Psoas muscle (tissue), 8 donors: ENCODE measurements at regions of chr11 and their contacts with region 1.

Region 1: DNA sequence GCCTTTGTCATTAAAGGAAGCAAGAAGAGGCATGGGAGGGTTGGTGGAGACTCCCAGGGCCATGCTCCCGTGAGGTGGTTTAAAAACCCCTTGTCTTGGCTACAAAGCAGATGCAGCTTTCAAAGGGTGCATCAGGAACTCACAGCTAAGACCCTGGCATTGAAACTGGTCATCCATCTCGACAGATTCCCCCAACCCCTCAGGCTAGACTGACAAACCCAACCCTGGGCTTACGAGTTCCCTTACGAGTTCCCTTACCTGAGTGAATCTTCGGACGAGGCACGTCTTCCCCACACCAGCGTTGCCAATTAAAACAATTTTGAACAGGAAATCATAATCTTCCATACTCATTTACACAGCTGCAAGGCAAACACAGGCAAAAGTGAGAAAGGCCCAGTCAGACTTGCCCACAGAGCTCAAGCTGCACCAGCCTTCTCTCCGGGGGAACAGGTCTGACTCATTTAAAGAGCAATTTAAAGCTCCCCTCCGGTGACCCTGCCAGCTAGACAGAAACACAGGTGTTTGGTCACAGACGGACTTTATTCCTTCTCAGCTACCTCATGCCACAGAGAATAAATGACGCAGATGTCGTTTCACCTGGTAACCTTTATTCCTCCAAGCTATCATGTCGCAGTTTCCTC is 74.6 kb downstream of the RAB30 start:
- DNase-seq: no peak
- ATAC-seq: peak; percentile 68 to 86 (median 80)
- H3K4me3 ChIP-seq: peak overlapping the region; percentile 34
- H3K27ac ChIP-seq: peak overlapping the region; percentile 66
- H3K4me1 ChIP-seq: peaks cover 65% of the 10 kb centered on the region
- H3K27me3 ChIP-seq: no peaks in the 10 kb centered on the region
- CTCF ChIP-seq: no peak

Region 2: GRCh38 chr11:82747471-82747870 is 249.6 kb before region 1 on chr11:
- intact Hi-C with region 1: no loop called
- DNase-seq: no peak
- ATAC-seq: no peak
- H3K4me3 ChIP-seq: no peak overlapping the region
- H3K27ac ChIP-seq: no peak overlapping the region
- H3K4me1 ChIP-seq: no peaks in the 10 kb centered on the region
- H3K27me3 ChIP-seq: no peaks in the 10 kb centered on the region
- CTCF ChIP-seq: no peak

Region 3: DNA sequence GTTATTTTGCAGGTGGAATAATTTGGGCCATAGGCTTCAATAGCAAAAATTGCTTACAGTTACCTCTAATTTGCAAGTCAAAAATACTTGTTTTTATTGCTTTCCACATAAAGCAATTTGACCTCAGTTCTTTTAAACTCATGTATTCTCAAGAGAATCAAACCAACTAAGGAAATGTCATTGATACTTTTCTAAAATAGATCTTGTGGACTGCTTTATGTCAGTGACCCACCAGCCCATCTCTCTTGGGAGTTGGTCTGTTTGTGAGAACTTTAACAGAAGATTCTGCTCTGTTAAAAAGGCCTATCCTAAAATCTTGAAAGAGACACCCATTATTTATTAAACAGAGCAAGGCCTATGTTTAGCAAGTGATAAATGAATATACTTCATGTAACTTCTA is 20.3 kb before region 1 on chr11:
- intact Hi-C with region 1: loop called in 1 of 2 experiments (anchors 2 kb)
- DNase-seq: no peak
- ATAC-seq: no peak
- H3K4me3 ChIP-seq: no peak overlapping the region
- H3K27ac ChIP-seq: no peak overlapping the region
- H3K4me1 ChIP-seq: peaks cover 7% of the 10 kb centered on the region
- H3K27me3 ChIP-seq: no peaks in the 10 kb centered on the region
- CTCF ChIP-seq: no peak

Region 4: DNA sequence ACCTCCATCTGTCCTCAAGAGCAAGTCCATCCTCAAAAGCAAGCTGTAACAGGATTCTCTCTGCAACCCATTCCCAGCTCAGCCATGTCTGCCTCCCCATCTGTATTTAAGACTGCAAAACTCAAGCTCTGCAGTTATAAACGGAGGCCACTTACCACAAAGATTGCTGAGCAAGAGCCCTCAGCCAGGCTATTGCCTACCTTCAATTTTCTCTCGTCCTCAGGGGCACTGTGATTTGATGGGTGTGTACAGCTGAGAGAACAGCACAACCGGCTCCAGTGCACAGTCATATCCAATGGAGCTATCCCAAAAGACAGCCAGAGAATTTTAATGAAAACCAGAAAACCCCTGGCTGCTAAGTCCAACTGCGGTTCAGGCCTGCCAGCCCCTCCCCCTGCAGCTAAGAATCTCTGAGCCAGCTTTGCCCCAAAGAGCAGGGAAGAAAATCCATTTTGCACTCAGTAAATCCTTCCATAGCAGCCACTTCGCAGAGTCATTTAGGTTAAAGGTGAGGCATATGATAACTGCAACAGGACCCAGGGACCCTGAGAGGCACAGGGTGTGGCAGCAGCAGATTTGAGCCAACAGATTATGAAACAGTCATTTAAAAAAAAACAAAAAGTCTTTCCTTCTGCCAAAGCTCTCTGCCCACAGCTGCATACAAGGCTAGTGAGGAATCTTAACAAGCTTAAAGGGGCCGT is 37.0 kb after region 1 on chr11:
- intact Hi-C with region 1: loop called in 1 of 2 experiments (anchors 5 kb)
- DNase-seq: peak; percentile 41 to 78
- ATAC-seq: peak; percentile 71 to 82 (median 76)
- H3K4me3 ChIP-seq: peak overlapping the region; percentile 59
- H3K27ac ChIP-seq: peak overlapping the region; percentile 77
- H3K4me1 ChIP-seq: peaks cover 43% of the 10 kb centered on the region
- H3K27me3 ChIP-seq: no peaks in the 10 kb centered on the region
- CTCF ChIP-seq: no peak